Left cardiac atrium (tissue), 4 donors: ENCODE measurements at regions of chr16 and their contacts with region 1.

Region 1: GRCh38 chr16:57098188-57098841 is 5.9 kb downstream of the CPNE2 start:
- DNase-seq: no peak
- ATAC-seq: no peak

Region 2: DNA sequence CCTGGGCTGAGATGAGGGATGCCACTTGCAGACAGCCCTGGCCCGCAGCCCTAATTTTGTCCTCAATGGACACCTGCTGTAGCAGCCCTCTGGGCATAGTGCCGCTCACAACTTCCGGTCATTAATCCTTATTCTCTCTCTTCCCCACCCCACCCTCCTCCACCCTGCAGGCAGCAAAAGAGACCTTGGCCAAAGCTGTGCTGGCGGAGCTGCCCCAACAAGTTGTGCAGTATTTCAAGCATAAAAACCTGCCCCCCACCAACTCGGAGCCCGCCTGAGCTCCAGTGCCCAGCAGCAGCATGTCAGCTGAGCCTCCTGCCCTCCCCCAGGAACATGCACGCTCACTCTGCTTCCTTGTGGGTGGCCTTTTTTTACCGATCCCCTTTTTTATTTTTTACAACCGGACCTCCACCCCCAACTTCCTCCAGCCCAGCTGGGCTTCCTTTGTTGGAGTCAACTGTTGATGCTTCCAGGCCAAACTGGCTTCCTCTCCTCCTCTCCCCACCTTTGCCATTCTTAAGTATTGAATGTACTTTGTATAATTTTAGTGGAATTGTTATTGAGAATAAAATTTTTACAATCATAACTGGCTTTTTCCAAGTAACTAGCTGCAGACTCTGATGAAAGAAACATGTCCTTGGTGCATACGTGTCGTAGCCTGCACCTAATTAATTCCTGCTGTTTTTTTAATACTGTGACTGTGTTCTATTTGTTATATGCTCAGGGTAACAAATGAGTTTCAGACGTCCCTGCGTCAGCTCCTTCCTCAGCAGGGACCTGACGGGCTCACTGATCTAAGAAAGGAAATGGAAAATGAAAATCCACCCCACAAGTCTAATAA is 49.3 kb after region 1 on chr16:
- intact Hi-C with region 1: loop called in 1 of 2 experiments (anchors 5 kb)
- DNase-seq: no peak
- ATAC-seq: peak; percentile 12 to 31

Region 3: DNA sequence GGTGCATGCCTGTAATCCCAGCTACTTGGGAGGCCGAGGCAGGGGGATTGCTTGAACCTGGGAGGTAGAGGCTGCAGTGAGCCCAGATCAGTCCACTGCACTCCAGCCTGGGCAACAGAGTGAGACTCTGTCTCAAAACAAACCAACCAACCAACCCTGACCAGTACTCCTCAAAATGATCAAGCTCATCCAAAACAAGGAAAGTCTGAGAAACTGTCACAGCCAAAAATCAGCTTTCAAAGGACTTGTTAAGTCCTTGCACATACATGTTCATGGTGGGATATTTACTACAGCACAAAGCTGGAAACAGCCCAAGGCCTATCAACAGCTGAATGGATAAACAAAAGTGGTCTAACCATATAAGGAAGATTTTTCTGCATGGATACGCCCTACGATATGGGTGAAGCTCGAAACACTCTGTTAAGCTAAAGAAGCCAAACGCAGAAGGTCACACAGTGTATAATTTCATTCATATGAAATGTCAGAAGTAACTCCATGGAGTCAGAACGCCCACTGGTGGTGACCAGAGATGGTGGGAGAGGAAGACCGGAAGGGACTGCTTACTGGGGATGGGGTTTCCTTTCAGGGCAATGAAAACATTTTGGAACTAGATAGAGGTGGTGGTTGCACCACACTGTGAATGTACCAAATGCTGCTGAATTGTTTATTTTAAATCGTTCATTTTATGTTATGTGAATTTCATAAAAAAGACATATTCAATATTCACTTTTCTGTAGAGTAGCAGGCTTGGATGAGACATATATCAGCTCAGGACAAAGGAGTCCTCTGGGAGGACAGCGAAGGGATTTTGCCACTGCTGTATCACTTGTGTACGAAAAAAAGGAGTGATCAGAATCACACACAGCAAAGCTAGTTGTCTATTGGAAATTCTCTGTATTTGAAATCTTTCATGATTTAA is 324.0 kb after region 1 on chr16:
- intact Hi-C with region 1: no loop called
- DNase-seq: peak; percentile 62
- ATAC-seq: peak; percentile 60 to 78